Endothelial cell of umbilical vein (primary cell): ENCODE measurements at regions of chr11 and their contacts with region 1.

Region 1: DNA sequence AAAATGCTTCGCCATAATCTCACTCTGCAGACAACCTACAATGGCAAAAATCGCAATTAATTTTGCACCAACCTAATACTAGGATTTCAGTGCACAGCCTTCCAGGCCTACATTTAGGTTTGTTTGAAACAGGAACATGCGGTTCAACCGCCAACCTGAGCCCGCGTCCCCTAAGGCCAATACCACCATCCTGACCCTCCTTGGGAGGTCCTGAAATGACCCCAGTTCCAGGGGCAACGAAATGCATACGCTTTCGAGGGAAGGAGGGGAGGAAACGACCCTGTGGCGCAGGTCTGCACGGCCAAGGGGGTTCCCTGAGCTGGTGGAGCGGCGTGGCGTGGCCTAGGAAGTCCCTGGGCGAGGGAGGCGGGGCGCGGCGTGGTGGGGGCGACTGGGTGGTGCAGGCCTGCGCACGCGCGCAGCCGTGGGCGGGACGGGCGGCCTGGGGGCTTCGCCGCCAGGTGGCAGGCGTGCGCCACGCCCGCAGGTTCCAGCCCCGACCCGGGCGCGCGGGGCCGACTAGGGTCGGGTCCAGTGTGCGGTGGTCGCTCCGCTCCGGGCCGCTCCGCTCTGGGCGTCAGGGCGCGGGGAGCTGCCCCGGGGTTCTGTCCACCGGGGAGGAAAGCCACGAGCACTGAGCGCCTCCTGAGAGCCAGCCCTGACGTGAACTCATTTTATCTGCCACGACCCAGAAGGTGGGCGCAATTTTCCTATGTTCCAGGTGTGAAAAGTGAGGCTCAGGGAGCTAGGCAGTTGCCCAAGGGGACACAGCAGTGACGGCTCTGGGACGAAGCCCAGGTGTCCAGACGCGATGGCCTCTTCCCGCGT is 94.1 kb downstream of the SWAP70 start:
- DNase-seq: peak; percentile 77
- H3K4me3 ChIP-seq: peak overlapping the region in 2 of 3 experiments; percentile 33 to 37
- H3K27ac ChIP-seq: peak overlapping the region; percentile 67
- H3K4me1 ChIP-seq: peaks cover 34% of the 10 kb centered on the region
- H3K27me3 ChIP-seq: no peaks in the 10 kb centered on the region
- CTCF ChIP-seq: peak; percentile 67 to 92
- POLR2A ChIP-seq: peak; percentile 85

Region 2: DNA sequence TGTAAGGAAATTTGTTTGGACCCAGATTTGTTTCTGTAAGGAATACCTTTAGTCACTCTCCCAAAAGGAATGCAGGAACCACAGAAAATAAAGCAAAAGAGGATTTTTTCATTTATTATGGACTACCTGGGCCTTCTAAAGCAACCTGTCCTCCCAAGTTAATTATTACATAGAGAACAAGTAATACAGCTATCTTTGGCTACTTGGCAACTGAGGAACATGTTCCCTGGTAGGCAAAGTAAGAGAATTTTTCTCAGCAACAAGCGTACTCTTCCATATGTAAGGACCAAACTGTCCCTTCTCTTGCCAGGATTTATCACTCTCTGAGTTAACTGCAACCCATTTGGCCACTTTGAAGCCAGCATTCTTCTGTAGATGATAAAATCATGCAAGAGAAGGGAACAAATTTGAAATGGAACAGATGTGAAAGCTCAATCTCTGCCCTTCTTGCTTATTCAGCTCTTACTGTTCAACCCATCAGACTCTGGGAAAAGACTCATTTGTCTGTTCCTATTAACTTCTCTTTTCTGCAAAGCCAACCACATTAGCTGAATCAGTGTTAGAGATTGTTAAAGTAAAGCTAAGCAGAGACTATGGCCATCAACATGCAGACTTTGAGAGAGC is 96.0 kb after region 1 on chr11:
- CTCF ChIA-PET with region 1: interaction called, 3 read pairs
- POLR2A ChIA-PET with region 1: no interaction called
- dilution Hi-C with region 1: no loop called
- intact Hi-C with region 1: loop called (anchors 2 kb)
- DNase-seq: no peak
- H3K4me3 ChIP-seq: no peak overlapping the region
- H3K27ac ChIP-seq: no peak overlapping the region
- H3K4me1 ChIP-seq: peaks cover 46% of the 10 kb centered on the region
- H3K27me3 ChIP-seq: no peaks in the 10 kb centered on the region
- CTCF ChIP-seq: no peak
- POLR2A ChIP-seq: no peak

Region 3: GRCh38 chr11:9906043-9906791 is 148.2 kb after region 1 on chr11:
- CTCF ChIA-PET with region 1: interaction called, 4 read pairs
- POLR2A ChIA-PET with region 1: no interaction called
- dilution Hi-C with region 1: no loop called
- intact Hi-C with region 1: loop called (anchors 1 kb)
- DNase-seq: peak; percentile 71
- H3K4me3 ChIP-seq: no peak overlapping the region
- H3K27ac ChIP-seq: peak overlapping the region; percentile 86
- H3K4me1 ChIP-seq: peaks cover 30% of the 10 kb centered on the region
- H3K27me3 ChIP-seq: no peaks in the 10 kb centered on the region
- CTCF ChIP-seq: no peak
- POLR2A ChIP-seq: no peak

Region 4: GRCh38 chr11:10076458-10077141 is 318.6 kb after region 1 on chr11:
- CTCF ChIA-PET with region 1: interaction called, 3 read pairs
- POLR2A ChIA-PET with region 1: no interaction called
- dilution Hi-C with region 1: no loop called
- intact Hi-C with region 1: loop called (anchors 1 kb)
- DNase-seq: peak; percentile 28
- H3K4me3 ChIP-seq: no peak overlapping the region
- H3K27ac ChIP-seq: no peak overlapping the region
- H3K4me1 ChIP-seq: no peaks in the 10 kb centered on the region
- H3K27me3 ChIP-seq: no peaks in the 10 kb centered on the region
- CTCF ChIP-seq: peak; percentile 51 to 84
- POLR2A ChIP-seq: no peak

Region 5: DNA sequence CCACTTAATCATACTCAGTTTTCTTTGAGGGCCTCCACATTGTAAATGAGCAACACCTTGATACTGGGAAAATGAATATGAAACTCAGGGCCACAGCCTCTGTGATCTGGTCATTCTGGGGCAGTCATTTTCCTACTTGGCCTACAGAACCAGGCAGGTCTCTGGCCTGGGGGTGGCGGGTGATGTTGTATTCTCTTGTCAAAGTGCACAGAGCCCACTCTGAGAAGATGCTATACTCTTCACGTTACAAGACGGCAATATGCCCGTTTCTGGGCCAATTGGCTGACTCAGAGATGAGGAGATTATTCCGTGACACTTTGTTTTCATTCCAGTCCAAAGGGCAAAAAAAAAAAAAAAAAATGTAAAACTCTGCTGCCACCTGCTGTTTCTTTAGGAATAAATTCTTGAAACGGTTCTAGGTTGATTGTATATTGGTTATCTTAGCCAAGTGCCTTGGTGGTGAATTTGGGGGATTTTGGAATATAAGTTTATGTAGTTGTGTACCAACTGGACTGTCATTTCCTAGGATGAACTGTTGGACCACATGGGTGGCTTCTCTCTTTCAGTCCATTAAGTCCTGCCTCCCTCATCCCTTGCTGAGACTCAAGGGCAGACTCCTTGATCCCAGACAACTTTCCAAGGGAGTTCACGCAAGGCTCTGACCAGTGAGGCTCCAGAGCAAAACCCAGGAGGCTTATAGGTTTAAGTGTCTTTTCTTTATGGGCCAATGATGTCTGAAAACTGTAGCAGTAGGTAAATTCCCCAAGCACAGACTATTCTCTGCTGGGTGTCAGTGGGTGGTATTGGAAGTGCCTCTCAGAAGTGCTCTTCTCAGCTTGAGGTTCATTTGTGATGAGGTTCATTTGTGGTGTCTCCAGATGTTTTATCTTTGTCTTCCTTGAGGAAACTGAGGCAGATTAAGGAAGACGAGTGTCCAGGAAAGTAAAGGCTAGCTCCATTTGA is 565.1 kb after region 1 on chr11:
- CTCF ChIA-PET with region 1: interaction called, 10 read pairs
- POLR2A ChIA-PET with region 1: interaction called, 9 read pairs
- dilution Hi-C with region 1: no loop called
- intact Hi-C with region 1: loop called (anchors 1 kb)
- DNase-seq: peak; percentile 92
- H3K4me3 ChIP-seq: no peak overlapping the region
- H3K27ac ChIP-seq: peak overlapping the region; percentile 28
- H3K4me1 ChIP-seq: peaks cover 57% of the 10 kb centered on the region
- H3K27me3 ChIP-seq: no peaks in the 10 kb centered on the region
- CTCF ChIP-seq: peak; percentile 28 to 46
- POLR2A ChIP-seq: no peak

Region 6: GRCh38 chr11:10366568-10367370 is 608.7 kb after region 1 on chr11:
- CTCF ChIA-PET with region 1: interaction called, 20 read pairs
- POLR2A ChIA-PET with region 1: no interaction called
- dilution Hi-C with region 1: no loop called
- intact Hi-C with region 1: loop called (anchors 1 kb)
- DNase-seq: peak; percentile 94
- H3K4me3 ChIP-seq: no peak overlapping the region
- H3K27ac ChIP-seq: peak overlapping the region; percentile 21
- H3K4me1 ChIP-seq: peaks cover 6% of the 10 kb centered on the region
- H3K27me3 ChIP-seq: no peaks in the 10 kb centered on the region
- CTCF ChIP-seq: peak; percentile 85 to 91
- POLR2A ChIP-seq: no peak

Region 7: DNA sequence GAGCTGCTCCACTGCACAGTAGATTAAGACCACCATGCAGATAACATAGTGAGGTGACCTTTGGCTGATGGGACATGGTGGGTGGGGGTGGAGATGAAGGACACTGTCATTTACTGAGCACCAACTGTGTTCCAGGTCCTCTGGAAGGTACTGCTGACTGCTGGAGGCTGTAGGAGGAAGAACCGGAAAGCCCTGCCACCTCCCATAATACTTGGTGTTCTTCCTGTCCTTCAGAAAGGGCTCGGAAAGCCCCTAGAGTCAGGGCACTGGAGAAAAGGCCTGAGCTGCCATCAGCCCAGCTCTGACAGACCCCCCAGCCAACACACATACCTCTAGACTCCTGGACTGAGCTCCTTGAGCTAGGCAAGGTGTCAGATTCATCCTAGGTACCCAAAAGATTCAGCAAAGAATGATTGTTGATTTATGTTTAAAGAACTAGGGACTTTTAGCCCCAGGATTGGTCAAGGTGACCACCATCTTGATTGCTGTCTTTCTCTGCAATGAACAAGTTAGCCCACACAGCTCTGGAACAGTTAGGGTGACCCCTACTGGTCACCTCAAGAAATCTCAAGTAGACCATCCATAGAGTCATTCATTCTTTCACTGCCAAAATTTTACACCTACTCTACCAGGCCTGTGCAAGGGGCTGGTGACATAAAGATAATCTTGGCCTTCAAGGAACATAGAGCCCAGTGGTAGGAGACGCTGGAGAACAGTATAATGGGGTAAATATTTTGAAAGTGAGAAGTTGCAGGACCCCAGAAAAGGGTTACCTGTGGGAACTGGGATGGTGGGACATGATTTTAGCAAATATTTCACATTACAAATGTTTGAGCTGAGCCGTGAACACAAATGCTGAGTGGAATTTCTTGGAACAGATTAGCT is 896.1 kb after region 1 on chr11:
- CTCF ChIA-PET with region 1: no interaction called
- POLR2A ChIA-PET with region 1: no interaction called
- dilution Hi-C with region 1: no loop called
- intact Hi-C with region 1: loop called (anchors 2 kb)
- DNase-seq: peak; percentile 73
- H3K4me3 ChIP-seq: no peak overlapping the region
- H3K27ac ChIP-seq: no peak overlapping the region
- H3K4me1 ChIP-seq: peaks cover 21% of the 10 kb centered on the region
- H3K27me3 ChIP-seq: no peaks in the 10 kb centered on the region
- CTCF ChIP-seq: peak; percentile 72 to 78
- POLR2A ChIP-seq: no peak